ENCODE measurements at regions of chr21 and their contacts with region 1.

Region 1: DNA sequence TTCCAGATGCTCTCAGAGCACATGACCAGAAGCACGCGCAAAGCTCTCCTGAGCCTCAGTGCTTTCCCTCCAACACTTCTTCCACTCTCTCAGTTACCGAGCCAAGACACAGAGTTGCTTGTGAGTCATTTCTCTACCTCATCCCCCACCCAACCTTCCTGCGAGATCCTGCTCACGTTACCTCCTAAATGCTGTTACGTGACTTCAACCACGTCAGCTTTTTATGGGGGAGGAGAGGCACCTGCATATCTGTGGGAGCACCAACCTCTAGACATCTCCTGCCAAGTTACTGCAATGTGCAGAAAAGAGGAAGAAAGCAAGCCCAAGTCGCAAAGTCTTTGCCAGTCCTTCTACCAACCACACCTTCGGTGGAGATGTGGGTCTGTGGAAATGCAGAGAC is 27.2 kb upstream of the ERG start:
- DNase-seq: peak; percentile 40
- ATAC-seq: peak; percentile 74
- H3K4me3 Mint-ChIP-seq: no peak overlapping the region
- H3K27ac Mint-ChIP-seq: peak overlapping the region; percentile 1
- H3K4me1 Mint-ChIP-seq: peaks cover 5% of the 10 kb centered on the region
- H3K27me3 Mint-ChIP-seq: peaks cover 11% of the 10 kb centered on the region

Region 2: DNA sequence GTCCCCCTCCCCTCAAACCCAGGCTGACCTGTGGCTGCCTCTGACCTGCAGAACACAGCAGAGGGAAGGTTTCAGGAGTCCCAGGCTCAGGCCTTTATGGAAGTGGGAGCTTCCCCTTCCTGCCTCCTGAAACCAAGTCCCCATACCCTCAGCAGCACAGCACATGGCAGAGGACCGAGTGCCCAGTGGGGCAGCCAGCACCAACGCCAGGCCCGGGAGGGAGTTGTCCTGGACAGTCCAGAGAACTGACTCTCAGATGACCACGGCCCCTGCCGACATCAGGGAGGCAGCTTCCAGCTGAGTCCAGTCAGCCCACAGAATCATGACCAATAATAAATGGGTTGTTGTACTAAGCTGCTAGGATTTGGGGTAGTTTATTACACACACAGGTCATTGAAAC is 52.4 kb after region 1 on chr21:
- CTCF ChIA-PET with region 1: no interaction called
- POLR2A ChIA-PET with region 1: no interaction called
- intact Hi-C with region 1: no loop called
- DNase-seq: no peak
- ATAC-seq: no peak
- H3K4me3 Mint-ChIP-seq: no peak overlapping the region
- H3K27ac Mint-ChIP-seq: no peak overlapping the region
- H3K4me1 Mint-ChIP-seq: no peaks in the 10 kb centered on the region
- H3K27me3 Mint-ChIP-seq: no peaks in the 10 kb centered on the region

Region 3: DNA sequence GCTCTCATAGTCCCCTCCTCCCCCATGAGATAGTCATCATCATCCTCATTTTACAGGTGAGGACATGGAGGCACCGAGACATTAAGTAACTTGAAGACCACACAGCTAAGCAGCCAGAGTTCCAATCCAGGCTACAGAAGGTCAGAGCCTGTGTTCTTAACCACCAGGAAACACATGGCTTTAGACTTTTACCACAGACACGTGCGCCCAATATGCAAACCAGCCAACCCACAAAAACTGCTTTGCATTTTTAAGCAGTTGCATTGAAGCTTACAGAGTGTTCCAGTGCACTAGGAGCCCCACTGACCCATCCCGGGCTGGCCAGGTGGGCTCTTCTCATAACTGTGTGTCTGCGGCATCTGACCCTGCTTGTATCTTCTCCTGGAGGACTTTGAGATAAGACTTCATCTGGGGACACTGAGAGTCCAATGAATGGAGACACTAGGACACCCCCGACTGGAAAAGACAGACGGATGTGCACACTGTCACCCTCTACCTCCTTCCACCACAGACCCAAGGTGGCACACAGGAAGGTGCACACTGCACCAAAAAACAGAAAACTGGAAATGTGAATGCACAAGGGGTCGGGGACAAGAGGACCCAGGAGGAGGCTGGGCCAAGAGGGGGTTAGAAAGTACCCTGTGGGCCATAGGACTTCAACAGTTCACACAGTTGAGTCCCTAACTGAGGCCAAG is 336.7 kb after region 1 on chr21:
- CTCF ChIA-PET with region 1: no interaction called
- POLR2A ChIA-PET with region 1: no interaction called
- intact Hi-C with region 1: loop called in 1 of 2 experiments (anchors 10 kb)
- DNase-seq: no peak
- ATAC-seq: no peak
- H3K4me3 Mint-ChIP-seq: no peak overlapping the region
- H3K27ac Mint-ChIP-seq: no peak overlapping the region
- H3K4me1 Mint-ChIP-seq: no peaks in the 10 kb centered on the region
- H3K27me3 Mint-ChIP-seq: peaks cover 8% of the 10 kb centered on the region

Measured in activated CD4-positive, alpha-beta T cell treated with anti-CD3 and anti-CD28 coated beads for 36 hours (primary cell).